Common myeloid progenitor, CD34-positive (primary cell): ENCODE measurements at regions of chr1 and their contacts with region 1.

Region 1: DNA sequence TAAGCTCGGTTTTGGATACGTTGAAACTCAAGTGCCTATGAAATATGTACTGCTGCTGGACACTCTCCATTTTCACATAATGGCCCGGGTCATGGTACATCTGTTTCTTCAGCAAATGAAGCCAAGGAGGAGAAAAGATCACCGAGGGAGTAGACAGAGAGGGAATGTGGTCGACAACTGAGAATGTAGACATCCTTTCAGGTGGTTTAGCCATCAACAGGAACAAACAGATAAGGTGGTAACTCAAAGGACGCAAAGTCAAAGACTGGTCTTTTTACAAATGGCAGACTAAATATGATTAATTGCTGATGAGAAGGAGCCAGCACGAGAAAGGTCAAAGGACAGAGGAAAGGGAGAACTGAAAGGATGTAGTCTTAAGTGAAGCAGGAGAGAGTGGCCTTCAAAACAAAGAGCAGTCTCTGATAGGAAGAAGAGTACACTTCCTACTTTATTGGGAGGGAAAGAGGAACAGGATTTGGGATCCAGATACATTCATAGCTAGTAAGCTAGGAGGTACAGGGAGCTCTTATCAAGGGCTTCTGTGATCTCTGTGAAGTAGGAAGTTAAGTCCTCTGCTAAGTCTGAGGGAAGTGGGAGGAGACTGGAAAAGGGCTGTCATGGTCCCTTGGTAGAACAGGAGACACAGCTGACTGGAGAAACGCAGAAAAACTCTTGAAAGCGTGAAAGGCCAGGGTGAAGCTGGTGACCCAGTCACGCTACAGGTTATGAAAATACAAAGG is 28.3 kb downstream of the NUP133 start:
- DNase-seq: peak; percentile 6 to 16 (median 9)
- H3K4me3 ChIP-seq: no peak overlapping the region
- H3K27ac ChIP-seq: no peak overlapping the region
- H3K4me1 ChIP-seq: peaks cover 0 to 2% (median 0%) of the 10 kb centered on the region in 4 experiments
- H3K27me3 ChIP-seq: no peaks in the 10 kb centered on the region

Region 2: DNA sequence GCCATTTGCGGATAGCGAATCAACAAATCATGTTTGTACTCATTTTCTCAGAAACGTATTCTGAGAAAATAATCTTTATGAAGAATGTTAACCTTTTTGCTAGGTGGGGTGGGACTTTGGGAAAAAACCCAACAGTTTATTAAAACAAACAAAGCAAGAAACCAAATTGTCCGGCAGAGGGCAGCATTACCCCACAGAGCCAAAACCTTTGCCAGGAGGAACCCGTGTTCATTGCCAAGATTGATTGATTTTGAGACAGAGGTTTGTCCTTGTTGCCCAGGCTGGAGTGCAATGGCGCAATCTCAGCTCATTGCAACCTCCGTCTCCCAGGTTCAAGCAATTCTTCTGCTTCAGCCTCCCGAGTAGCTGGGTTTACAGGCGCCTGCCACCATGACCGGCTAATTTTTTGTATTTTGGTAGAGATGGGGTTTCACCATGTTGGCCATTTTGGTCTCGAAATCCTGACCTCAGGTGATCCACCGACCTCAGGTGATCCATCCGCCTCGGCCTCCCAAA is 815.4 kb before region 1 on chr1:
- CTCF ChIA-PET with region 1: interaction called, 18 read pairs
- POLR2A ChIA-PET with region 1: no interaction called
- DNase-seq: peak; percentile 72 to 85 (median 74)
- H3K4me3 ChIP-seq: no peak overlapping the region
- H3K27ac ChIP-seq: no peak overlapping the region
- H3K4me1 ChIP-seq: peaks cover 0 to 9% (median 4%) of the 10 kb centered on the region in 4 experiments
- H3K27me3 ChIP-seq: peaks cover 0 to 7% (median 0%) of the 10 kb centered on the region in 5 experiments

Region 3: DNA sequence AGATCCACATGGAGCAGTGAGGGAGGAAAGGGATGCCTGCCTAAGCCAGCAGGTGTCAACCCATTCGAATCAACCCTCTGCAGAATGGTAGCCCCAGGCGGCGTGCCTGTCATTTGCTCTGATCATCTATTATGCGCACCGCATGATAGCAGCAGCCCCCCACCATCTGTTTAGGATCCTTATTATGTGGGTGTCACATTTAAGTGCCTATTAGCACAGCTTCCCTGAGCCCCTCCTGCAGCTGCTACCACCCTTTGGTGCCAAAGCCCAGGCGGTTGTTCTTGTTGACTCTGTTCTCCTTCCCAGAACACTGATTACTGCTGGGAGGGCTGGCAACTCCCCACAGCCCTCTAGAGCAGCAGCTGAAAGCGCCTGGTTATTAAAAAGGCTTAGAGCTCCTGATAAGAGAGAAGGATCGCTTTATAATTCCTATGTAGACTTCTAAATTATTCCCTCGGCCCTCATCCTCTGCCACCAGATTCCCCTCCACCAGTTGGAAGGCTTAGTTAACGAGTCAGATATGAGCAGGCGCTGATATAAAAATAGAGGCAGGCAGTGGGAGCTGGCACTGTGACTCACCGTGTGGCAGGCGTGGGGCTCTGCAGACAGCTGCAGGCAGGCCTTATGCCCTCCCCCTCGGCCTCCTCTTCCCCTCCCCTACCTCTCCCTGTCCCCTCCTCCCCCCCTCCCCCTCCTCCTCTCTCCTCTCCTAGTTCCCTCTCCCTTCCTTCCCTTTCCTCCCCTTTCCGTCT is 69.0 kb before region 1 on chr1:
- CTCF ChIA-PET with region 1: no interaction called
- POLR2A ChIA-PET with region 1: no interaction called
- DNase-seq: peak; percentile 36 to 78 (median 74)
- H3K4me3 ChIP-seq: peak overlapping the region in 2 of 7 experiments; percentile 8 to 43
- H3K27ac ChIP-seq: no peak overlapping the region
- H3K4me1 ChIP-seq: peaks cover 4 to 30% (median 29%) of the 10 kb centered on the region in 4 experiments
- H3K27me3 ChIP-seq: peaks cover 4 to 54% (median 28%) of the 10 kb centered on the region in 5 experiments

Region 4: DNA sequence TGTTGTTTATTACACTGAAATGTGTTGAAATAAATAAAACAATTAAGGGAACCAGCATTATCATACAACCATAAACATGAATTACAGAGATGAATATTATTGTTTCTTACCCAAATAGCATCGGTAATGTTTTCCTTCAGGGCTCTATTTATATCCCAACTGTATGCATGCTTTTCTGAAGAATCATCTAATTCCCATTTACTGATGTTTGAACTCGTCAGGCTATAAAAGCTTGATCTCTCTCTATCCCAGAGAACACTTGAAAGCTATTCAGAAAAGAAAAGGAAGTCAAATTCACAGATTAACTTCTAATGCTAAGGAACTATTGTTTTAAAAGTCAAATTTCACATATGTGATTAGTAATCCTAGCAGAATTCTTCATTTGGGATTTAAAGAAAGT is 16.0 kb after region 1 on chr1:
- CTCF ChIA-PET with region 1: interaction called, 19 read pairs
- POLR2A ChIA-PET with region 1: no interaction called
- DNase-seq: no peak
- H3K4me3 ChIP-seq: no peak overlapping the region
- H3K27ac ChIP-seq: no peak overlapping the region
- H3K4me1 ChIP-seq: no peaks in the 10 kb centered on the region
- H3K27me3 ChIP-seq: no peaks in the 10 kb centered on the region

Region 5: DNA sequence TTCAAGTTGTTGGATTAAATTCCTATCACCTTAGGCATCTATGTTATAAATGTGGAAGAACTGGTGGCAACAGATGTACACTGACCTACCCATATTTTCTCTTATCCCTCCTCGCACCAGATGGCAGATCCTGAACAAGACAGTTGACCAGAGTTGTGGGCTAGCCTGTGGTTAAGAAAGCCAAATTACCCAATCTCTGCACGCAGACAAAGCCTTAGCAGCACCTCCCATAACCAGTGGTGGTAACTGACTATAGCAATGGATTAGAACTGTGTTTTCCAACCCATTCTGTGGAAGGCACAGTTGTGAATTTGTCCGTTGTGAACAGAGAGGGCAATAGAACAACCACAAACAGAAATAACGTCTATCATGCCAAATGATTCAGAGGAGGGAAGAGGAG is 58.1 kb after region 1 on chr1:
- CTCF ChIA-PET with region 1: no interaction called
- POLR2A ChIA-PET with region 1: no interaction called
- DNase-seq: peak in 2 of 3 donors; percentile 19 to 25
- H3K4me3 ChIP-seq: no peak overlapping the region
- H3K27ac ChIP-seq: no peak overlapping the region
- H3K4me1 ChIP-seq: peaks cover 0 to 5% (median 0%) of the 10 kb centered on the region in 4 experiments
- H3K27me3 ChIP-seq: no peaks in the 10 kb centered on the region